Thyroid gland (tissue), 4 donors: ENCODE measurements at regions of chr16 and their contacts with region 1.

Region 1: GRCh38 chr16:67993189-67994039 is 5.9 kb downstream of the DPEP2 start:
- DNase-seq: peak; percentile 74
- H3K4me3 ChIP-seq: peak overlapping the region in 1 of 3 donors; percentile 5
- H3K27ac ChIP-seq: peak overlapping the region in 2 of 3 donors; percentile 7 to 46
- H3K4me1 ChIP-seq: peaks cover 10 to 11% of the 10 kb centered on the region in 2 donors
- H3K27me3 ChIP-seq: no peaks in the 10 kb centered on the region
- CTCF ChIP-seq: peak; percentile 82 to 99 (median 97)
- POLR2A ChIP-seq: peak in 1 of 2 donors; percentile 15

Region 2: DNA sequence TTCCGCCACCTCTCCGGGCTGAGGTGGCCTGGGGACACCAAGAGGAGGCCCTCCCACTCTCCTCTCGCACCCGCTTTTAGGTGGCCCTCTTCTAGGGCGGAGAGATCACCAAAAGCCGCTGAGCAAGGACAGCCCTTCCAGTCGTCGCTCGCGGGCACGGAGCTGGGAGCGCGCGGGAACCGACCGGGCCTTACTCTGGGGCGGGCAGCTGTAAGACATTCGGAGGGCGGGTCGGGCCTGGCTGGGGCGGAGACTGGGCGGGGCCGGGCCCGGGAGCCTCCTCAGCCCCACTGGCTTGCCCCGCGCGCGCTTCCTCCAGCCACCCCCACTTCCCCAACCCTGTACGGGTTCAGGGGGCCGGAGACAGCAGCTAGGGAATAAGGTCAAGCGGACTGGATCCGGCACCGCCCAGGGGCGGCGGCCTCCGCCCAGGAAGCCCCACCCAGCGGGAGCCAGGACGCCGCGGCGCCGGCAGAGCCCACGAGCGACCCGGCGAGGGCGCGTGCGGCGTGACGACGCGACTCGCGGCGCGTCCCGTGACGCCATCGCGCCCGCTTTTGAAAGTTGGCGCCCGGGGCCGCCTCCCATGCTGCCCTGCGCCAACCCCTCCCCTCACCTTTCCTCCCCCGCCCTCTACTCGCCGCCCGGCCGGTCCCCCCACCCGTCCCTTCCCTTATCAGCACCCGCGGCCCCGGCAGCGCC is 431.4 kb before region 1 on chr16:
- intact Hi-C with region 1: no loop called
- DNase-seq: peak; percentile 96 to 97
- H3K4me3 ChIP-seq: peak overlapping the region; percentile 2 to 86 (median 37)
- H3K27ac ChIP-seq: peak overlapping the region; percentile 82 to 98 (median 94)
- H3K4me1 ChIP-seq: peaks cover 11 to 27% of the 10 kb centered on the region in 2 donors
- H3K27me3 ChIP-seq: no peaks in the 10 kb centered on the region
- CTCF ChIP-seq: no peak
- POLR2A ChIP-seq: peak in 1 of 2 donors; percentile 76

Region 3: GRCh38 chr16:68040507-68041288 is 47.3 kb after region 1 on chr16:
- intact Hi-C with region 1: loop called (anchors 5 kb)
- DNase-seq: peak; percentile 79 to 85
- H3K4me3 ChIP-seq: no peak overlapping the region
- H3K27ac ChIP-seq: no peak overlapping the region
- H3K4me1 ChIP-seq: peaks cover 0 to 3% of the 10 kb centered on the region in 2 donors
- H3K27me3 ChIP-seq: no peaks in the 10 kb centered on the region
- CTCF ChIP-seq: peak; percentile 69 to 92 (median 87)
- POLR2A ChIP-seq: no peak

Region 4: GRCh38 chr16:68214726-68215125 is 221.3 kb after region 1 on chr16:
- intact Hi-C with region 1: no loop called
- DNase-seq: no peak
- H3K4me3 ChIP-seq: no peak overlapping the region
- H3K27ac ChIP-seq: no peak overlapping the region
- H3K4me1 ChIP-seq: peaks cover 0 to 3% of the 10 kb centered on the region in 2 donors
- H3K27me3 ChIP-seq: no peaks in the 10 kb centered on the region
- CTCF ChIP-seq: no peak
- POLR2A ChIP-seq: no peak

Region 5: GRCh38 chr16:68237243-68238028 is 244.0 kb after region 1 on chr16:
- intact Hi-C with region 1: loop called (anchors 10 kb)
- DNase-seq: peak; percentile 99 to 100
- H3K4me3 ChIP-seq: peak overlapping the region in 2 of 3 donors; percentile 32 to 68
- H3K27ac ChIP-seq: peak overlapping the region; percentile 90 to 96 (median 96)
- H3K4me1 ChIP-seq: peaks cover 31 to 40% of the 10 kb centered on the region in 2 donors
- H3K27me3 ChIP-seq: no peaks in the 10 kb centered on the region
- CTCF ChIP-seq: no peak
- POLR2A ChIP-seq: peak; percentile 91 to 98